ENCODE measurements at regions of chr20 and their contacts with region 1.

Region 1: DNA sequence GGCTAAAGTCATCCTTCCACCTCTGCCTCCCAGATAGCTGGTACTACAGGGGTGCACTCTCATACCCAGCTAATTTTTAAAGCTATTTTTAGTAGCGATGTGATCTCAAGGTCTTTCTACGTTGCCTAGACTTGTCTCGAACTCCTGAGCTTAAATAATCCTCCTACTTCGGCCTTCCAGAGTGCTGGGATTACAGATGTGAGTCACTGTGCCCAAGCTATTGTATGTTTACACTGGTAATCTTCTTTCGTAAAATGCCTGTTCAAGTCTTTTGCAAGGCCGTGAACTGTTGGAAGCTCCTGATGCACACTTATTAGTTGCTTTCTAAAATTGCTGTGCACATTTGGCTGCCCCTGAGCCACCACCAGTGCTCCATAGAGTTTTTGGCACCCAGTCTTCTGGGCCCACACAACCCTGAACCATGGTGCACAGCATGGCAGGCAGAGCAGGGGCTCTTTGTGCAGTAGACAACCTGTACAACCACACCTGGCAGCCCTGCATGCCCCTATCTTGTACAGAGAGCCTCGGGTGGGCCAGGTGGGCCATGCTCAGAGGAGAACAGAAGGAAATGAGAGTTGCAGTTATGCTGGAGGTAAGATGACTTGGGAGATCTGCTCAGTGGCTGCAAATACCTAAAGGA is 33.3 kb downstream of the PDRG1 start:
- DNase-seq: no peak
- ATAC-seq: no peak
- H3K4me3 ChIP-seq: no peak overlapping the region
- H3K27ac ChIP-seq: no peak overlapping the region
- H3K4me1 ChIP-seq: peaks cover 5% of the 10 kb centered on the region
- H3K27me3 ChIP-seq: no peaks in the 10 kb centered on the region
- CTCF ChIP-seq: no peak
- EP300 ChIP-seq: no peak
- POLR2A ChIP-seq: no peak
- RAD21 ChIP-seq: no peak

Region 2: DNA sequence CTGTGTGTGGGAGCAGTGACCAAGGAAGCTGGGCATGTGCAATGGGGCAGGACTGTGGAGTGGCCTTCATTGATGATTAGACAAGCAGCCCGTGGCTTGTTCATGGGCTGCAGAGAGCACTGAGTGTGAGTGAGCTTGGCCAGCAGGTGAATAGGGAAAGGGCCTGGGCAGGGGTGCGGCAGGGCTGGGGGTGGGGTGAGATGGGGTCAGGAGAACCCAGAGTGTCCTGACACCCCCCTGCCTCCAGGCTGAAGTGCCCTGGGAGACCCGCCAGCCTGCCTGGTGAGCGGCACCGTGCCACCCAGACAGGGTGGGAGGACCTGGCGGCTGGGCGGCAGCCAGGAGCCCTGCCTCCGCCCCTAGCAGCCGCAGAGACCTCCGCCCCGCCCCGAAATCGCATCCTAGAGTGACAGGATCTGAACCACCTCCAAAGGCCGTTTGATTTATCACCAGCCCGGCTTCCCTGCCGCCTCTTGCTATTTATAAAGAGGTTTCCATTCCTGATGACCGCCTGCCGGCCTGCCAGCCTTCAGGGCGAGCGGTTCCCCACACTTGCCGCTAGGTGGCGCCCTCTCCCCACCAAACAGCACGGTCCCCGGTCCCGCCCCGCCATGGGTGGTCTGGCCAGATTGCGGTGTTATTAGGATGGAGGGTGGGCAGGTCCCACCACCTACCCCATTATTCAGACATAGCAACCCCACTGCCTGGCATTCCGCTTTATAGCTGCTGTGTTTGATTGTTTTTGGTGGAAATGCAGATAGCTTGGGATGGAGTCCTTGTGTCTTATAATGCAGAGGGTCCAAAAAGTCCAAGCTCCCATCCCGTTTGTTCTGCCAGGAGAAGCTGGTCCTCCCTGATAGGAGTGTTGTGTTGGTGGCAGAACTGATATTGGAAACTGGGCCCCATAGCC is 95.9 kb before region 1 on chr20:
- CTCF ChIA-PET with region 1: no interaction called
- POLR2A ChIA-PET with region 1: no interaction called
- RAD21 ChIA-PET with region 1: no interaction called
- SMC1A ChIA-PET with region 1: no interaction called
- in situ Hi-C with region 1: no loop called
- intact Hi-C with region 1: no loop called
- DNase-seq: no peak
- ATAC-seq: peak; percentile 97
- H3K4me3 ChIP-seq: no peak overlapping the region
- H3K27ac ChIP-seq: no peak overlapping the region
- H3K4me1 ChIP-seq: no peaks in the 10 kb centered on the region
- H3K27me3 ChIP-seq: no peaks in the 10 kb centered on the region
- CTCF ChIP-seq: peak; percentile 96 to 98 (median 98); a peak in 5 of 6 replicates
- EP300 ChIP-seq: no peak
- POLR2A ChIP-seq: no peak
- RAD21 ChIP-seq: peak; percentile 86

Region 3: GRCh38 chr20:31837896-31838397 is 80.6 kb before region 1 on chr20:
- CTCF ChIA-PET with region 1: no interaction called
- POLR2A ChIA-PET with region 1: no interaction called
- RAD21 ChIA-PET with region 1: no interaction called
- SMC1A ChIA-PET with region 1: no interaction called
- in situ Hi-C with region 1: no loop called
- intact Hi-C with region 1: no loop called
- DNase-seq: no peak
- ATAC-seq: no peak
- H3K4me3 ChIP-seq: no peak overlapping the region
- H3K27ac ChIP-seq: no peak overlapping the region
- H3K4me1 ChIP-seq: peaks cover 8% of the 10 kb centered on the region; the same call in 1 of the 2 replicates
- H3K27me3 ChIP-seq: no peaks in the 10 kb centered on the region
- CTCF ChIP-seq: no peak
- EP300 ChIP-seq: no peak
- POLR2A ChIP-seq: no peak
- RAD21 ChIP-seq: no peak

Region 4: GRCh38 chr20:31879143-31879987 is 39.2 kb before region 1 on chr20:
- CTCF ChIA-PET with region 1: no interaction called
- POLR2A ChIA-PET with region 1: interaction called, 9 read pairs
- RAD21 ChIA-PET with region 1: interaction called, 6 read pairs
- SMC1A ChIA-PET with region 1: interaction called, 11 read pairs
- in situ Hi-C with region 1: no loop called
- intact Hi-C with region 1: no loop called
- DNase-seq: peak; percentile 45
- ATAC-seq: peak; percentile 98
- H3K4me3 ChIP-seq: peak overlapping the region; percentile 88
- H3K27ac ChIP-seq: no peak overlapping the region
- H3K4me1 ChIP-seq: peaks cover 3% of the 10 kb centered on the region; the same call in 1 of the 2 replicates
- H3K27me3 ChIP-seq: no peaks in the 10 kb centered on the region
- CTCF ChIP-seq: no peak
- EP300 ChIP-seq: no peak
- POLR2A ChIP-seq: no peak
- RAD21 ChIP-seq: no peak